OCI-LY7 (cell line): ENCODE measurements at regions of chr12 and their contacts with region 1.

Region 1: DNA sequence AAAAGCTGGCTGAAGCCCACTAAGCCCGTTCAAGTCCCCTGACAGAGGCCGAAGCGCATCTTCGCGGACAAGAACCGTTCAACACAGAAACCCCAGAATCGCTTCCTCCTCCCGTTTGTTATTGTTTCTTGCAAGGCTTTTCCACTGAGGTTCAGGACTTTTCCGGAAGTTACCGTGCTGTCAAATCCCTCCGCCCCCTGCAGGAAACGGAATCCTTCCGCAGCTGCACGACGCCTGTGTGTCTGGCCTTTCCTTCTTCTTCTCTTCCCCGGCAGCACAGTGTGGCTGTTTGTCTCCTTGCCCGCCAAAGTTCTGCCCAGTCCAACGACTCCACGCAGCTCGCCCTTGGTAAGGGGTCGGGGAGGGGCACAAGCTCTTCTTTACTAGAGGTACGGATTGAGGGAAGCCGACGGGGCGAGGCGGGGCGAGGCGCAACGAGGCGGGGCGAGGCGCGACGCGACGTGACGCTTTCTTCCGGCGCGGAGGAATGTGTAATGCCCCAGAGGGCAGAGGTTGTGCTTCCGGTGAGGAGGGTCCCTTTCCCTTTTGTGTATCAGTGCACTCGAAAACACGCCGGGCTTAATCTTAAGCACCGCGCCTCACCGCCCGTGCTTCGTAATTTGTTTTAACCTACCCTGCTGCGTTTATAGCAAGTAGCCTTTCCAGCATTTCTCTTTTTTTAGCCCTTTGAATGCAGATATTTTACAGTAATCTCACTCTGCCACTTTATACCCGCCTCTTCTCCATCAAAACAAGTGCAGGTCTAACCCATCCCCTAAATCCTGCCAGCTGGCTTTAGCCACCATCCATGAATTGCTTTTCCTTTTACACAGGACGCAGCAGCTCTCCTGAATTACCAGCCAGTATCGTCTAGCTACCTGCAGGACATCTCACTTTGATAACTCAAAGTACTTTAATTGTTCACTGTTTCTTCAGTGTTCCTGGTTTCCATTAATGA is at the start of gene KDM5A:
- DNase-seq: peak; percentile 96
- H3K4me3 ChIP-seq: peak within 1 kb of the TSS; percentile 83
- H3K27ac ChIP-seq: peak within 1 kb of the TSS; percentile 93
- H3K4me1 ChIP-seq: peaks cover 26% of the 10 kb centered on the region
- CTCF ChIP-seq: no peak
- total RNA-seq, gene KDM5A: 39.6 and 48.8 TPM in 2 replicates

Region 2: GRCh38 chr12:401235-402028 is 12.0 kb after region 1 on chr12 and contains the start of gene CCDC77:
- CTCF ChIA-PET with region 1: interaction called, 3 read pairs
- POLR2A ChIA-PET with region 1: interaction called, 43 read pairs
- intact Hi-C with region 1: loop called (anchors 1 kb)
- DNase-seq: peak; percentile 96
- H3K4me3 ChIP-seq: peak within 1 kb of the TSS; percentile 95
- H3K27ac ChIP-seq: peak within 1 kb of the TSS; percentile 56
- H3K4me1 ChIP-seq: peaks cover 14% of the 10 kb centered on the region
- CTCF ChIP-seq: peak; percentile 39
- total RNA-seq, gene CCDC77: 21.2 and 22.5 TPM in 2 replicates

Region 3: GRCh38 chr12:442235-442884 is 52.9 kb after region 1 on chr12:
- CTCF ChIA-PET with region 1: interaction called, 3 read pairs
- POLR2A ChIA-PET with region 1: interaction called, 12 read pairs
- intact Hi-C with region 1: no loop called
- DNase-seq: peak; percentile 41
- H3K4me3 ChIP-seq: no peak overlapping the region
- H3K27ac ChIP-seq: no peak overlapping the region
- H3K4me1 ChIP-seq: no peaks in the 10 kb centered on the region
- CTCF ChIP-seq: peak; percentile 88